HCT116 (cell line): ENCODE measurements at regions of chr1 and their contacts with region 1.

Region 1: DNA sequence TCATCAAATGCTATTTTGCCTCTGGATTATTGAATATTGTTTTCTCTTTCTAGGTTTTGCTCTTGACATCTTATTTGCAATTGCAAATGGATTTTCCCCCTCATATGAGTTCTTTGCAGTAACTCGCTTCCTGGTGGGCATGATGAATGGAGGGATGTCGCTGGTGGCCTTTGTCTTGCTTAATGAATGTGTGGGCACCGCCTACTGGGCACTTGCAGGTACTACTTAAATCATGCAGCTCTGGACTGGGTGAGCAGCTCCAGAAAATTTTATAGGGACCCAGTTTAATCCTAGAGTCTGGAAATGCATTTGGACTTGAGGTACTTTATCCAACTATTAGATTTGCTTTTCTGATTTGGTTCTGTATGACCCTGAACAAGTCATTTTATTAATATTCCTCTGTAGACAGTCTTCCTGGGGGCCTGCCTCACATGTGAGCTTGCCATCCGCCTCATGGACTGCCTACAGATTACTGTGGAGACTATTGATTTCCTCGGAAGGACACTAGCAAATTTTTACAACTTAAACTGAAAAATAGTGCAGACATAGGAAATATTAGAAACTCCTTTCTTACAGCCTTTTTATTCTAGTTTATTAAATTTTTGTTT is 44.5 kb downstream of the SLC22A15 start:
- DNase-seq: peak; percentile 57
- ATAC-seq: peak; percentile 96
- H3K4me3 ChIP-seq: no peak overlapping the region
- H3K27ac ChIP-seq: no peak overlapping the region
- H3K4me1 ChIP-seq: no peaks in the 10 kb centered on the region
- H3K27me3 ChIP-seq: no peaks in the 10 kb centered on the region
- CTCF ChIP-seq: peak; percentile 52 to 79 (median 73); a peak in 5 of 6 replicates
- POLR2A ChIP-seq: no peak
- RAD21 ChIP-seq: peak; percentile 56

Region 2: GRCh38 chr1:115807723-115808122 is 213.0 kb before region 1 on chr1:
- CTCF ChIA-PET with region 1: interaction called, 13 read pairs
- POLR2A ChIA-PET with region 1: no interaction called
- RAD21 ChIA-PET with region 1: no interaction called
- intact Hi-C with region 1: no loop called
- DNase-seq: peak; percentile 78
- ATAC-seq: peak; percentile 94
- H3K4me3 ChIP-seq: no peak overlapping the region
- H3K27ac ChIP-seq: no peak overlapping the region
- H3K4me1 ChIP-seq: no peaks in the 10 kb centered on the region
- H3K27me3 ChIP-seq: no peaks in the 10 kb centered on the region
- CTCF ChIP-seq: peak; percentile 68 to 82 (median 77); a peak in 5 of 6 replicates
- POLR2A ChIP-seq: no peak
- RAD21 ChIP-seq: peak; percentile 78

Region 3: GRCh38 chr1:116008651-116009390 is 12.0 kb before region 1 on chr1:
- CTCF ChIA-PET with region 1: interaction called, 10 read pairs
- POLR2A ChIA-PET with region 1: no interaction called
- RAD21 ChIA-PET with region 1: no interaction called
- intact Hi-C with region 1: no loop called
- DNase-seq: no peak
- ATAC-seq: no peak
- H3K4me3 ChIP-seq: no peak overlapping the region
- H3K27ac ChIP-seq: no peak overlapping the region
- H3K4me1 ChIP-seq: no peaks in the 10 kb centered on the region
- H3K27me3 ChIP-seq: no peaks in the 10 kb centered on the region
- CTCF ChIP-seq: no peak
- POLR2A ChIP-seq: no peak
- RAD21 ChIP-seq: no peak

Region 4: DNA sequence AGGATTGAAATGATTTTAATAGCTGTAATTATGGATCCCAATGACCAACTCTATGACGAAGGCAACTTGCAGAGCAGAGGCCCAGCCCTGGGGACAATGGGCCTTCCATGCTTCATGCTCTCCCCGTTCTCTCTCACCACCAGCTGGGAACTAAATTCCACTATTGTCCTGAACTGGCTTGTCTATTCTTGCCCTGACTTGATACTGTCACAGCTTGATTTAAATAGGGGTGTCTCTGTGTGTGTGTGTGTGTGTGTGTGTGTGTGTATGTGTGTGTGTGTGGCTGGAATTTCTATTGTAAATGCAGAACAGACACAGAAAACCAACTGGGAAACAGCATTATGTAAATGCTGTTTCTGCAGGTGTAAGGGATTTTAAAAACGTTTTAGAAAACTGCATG is 12.6 kb after region 1 on chr1:
- CTCF ChIA-PET with region 1: interaction called, 12 read pairs
- POLR2A ChIA-PET with region 1: no interaction called
- RAD21 ChIA-PET with region 1: no interaction called
- intact Hi-C with region 1: no loop called
- DNase-seq: no peak
- ATAC-seq: no peak
- H3K4me3 ChIP-seq: no peak overlapping the region
- H3K27ac ChIP-seq: no peak overlapping the region
- H3K4me1 ChIP-seq: no peaks in the 10 kb centered on the region
- H3K27me3 ChIP-seq: no peaks in the 10 kb centered on the region
- CTCF ChIP-seq: no peak
- POLR2A ChIP-seq: no peak
- RAD21 ChIP-seq: no peak

Region 5: GRCh38 chr1:116433275-116434257 is 412.8 kb after region 1 on chr1:
- CTCF ChIA-PET with region 1: no interaction called
- POLR2A ChIA-PET with region 1: no interaction called
- RAD21 ChIA-PET with region 1: no interaction called
- intact Hi-C with region 1: no loop called
- DNase-seq: no peak
- ATAC-seq: no peak
- H3K4me3 ChIP-seq: no peak overlapping the region
- H3K27ac ChIP-seq: no peak overlapping the region
- H3K4me1 ChIP-seq: no peaks in the 10 kb centered on the region
- H3K27me3 ChIP-seq: no peaks in the 10 kb centered on the region
- CTCF ChIP-seq: no peak
- POLR2A ChIP-seq: no peak
- RAD21 ChIP-seq: no peak